Sigmoid colon (tissue), 7 donors: ENCODE measurements at regions of chr1 and their contacts with region 1.

Region 1: DNA sequence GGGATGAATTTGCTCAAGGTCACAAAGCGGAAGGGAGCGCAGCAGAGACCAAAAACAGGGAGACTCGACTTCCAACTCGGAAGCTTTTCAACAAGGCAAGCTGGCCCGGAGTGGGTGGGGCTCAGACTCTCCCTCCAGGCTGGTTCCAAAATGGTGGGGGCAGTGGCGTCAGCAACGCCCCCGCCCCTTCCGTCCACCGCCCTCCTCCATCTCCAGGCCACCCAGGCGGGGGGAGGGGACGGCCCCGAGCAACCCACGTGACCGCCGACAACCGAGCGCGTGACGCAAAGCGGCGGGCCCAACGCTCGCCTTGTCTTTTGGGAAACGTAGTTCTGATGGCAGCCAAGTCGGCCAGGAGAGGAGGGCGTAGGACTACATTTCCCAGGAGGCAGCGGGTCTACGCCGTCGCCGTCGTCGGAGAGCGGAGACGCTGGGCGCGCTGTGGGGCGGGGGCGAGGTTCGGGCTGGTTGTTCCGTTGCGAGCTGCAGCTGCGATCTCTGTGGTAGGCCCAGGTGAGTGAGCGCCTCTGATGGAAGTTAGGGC is at the start of gene THRAP3:
- DNase-seq: peak; percentile 100
- H3K4me3 ChIP-seq: peak within 1 kb of the TSS; percentile 72 to 92 (median 84)
- H3K27ac ChIP-seq: peak within 1 kb of the TSS; percentile 95 to 99 (median 98)
- H3K4me1 ChIP-seq: peaks cover 0 to 50% (median 46%) of the 10 kb centered on the region in 4 donors
- H3K27me3 ChIP-seq: no peaks in the 10 kb centered on the region
- CTCF ChIP-seq: no peak
- EP300 ChIP-seq: peak in 2 of 4 donors; percentile 64 to 95
- POLR2A ChIP-seq: peak; percentile 98 to 99
- total RNA-seq, gene THRAP3: 77.8 to 104 (median 89.9) TPM

Region 2: GRCh38 chr1:35220976-35221375 is 1003.1 kb before region 1 on chr1:
- intact Hi-C with region 1: no loop called
- DNase-seq: no peak
- H3K4me3 ChIP-seq: no peak overlapping the region
- H3K27ac ChIP-seq: no peak overlapping the region
- H3K4me1 ChIP-seq: peaks cover 0 to 19% (median 16%) of the 10 kb centered on the region in 4 donors
- H3K27me3 ChIP-seq: no peaks in the 10 kb centered on the region
- CTCF ChIP-seq: no peak
- EP300 ChIP-seq: no peak
- POLR2A ChIP-seq: no peak

Region 3: DNA sequence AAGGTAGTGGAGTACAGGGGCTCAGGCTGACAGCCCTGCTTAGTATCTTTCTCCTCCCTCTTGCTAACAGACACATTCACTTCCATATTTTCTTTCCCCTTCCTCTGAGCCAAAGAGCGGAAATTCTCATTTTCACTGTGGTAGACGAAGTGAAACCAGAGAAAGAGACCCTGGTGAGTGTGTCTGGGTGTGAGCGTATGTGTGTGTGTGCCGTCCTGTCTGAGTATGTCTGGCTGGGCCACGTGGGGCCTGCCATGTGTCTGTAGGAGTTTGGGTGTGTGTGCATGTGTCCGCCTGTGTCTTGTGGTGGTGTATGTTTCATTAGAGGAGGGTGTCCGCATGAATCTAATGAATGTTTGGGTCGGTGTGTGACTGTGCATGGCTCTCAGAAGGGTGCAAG is 100.7 kb before region 1 on chr1:
- intact Hi-C with region 1: no loop called
- DNase-seq: no peak
- H3K4me3 ChIP-seq: no peak overlapping the region
- H3K27ac ChIP-seq: peak overlapping the region in 2 of 4 donors; percentile 11 to 66
- H3K4me1 ChIP-seq: peaks cover 0 to 33% (median 21%) of the 10 kb centered on the region in 4 donors
- H3K27me3 ChIP-seq: no peaks in the 10 kb centered on the region
- CTCF ChIP-seq: no peak
- EP300 ChIP-seq: no peak
- POLR2A ChIP-seq: no peak

Region 4: GRCh38 chr1:36149237-36149972 is 74.7 kb before region 1 on chr1 and contains the start of gene TRAPPC3:
- intact Hi-C with region 1: loop called (anchors 1 kb)
- DNase-seq: peak; percentile 100
- H3K4me3 ChIP-seq: peak within 1 kb of the TSS; percentile 74 to 91 (median 78)
- H3K27ac ChIP-seq: peak within 1 kb of the TSS; percentile 97 to 100 (median 99)
- H3K4me1 ChIP-seq: peaks cover 0 to 61% (median 45%) of the 10 kb centered on the region in 4 donors
- H3K27me3 ChIP-seq: no peaks in the 10 kb centered on the region
- CTCF ChIP-seq: peak; percentile 84 to 97 (median 92)
- EP300 ChIP-seq: peak in 2 of 4 donors; percentile 3 to 60
- POLR2A ChIP-seq: peak; percentile 86 to 87
- total RNA-seq, gene TRAPPC3: 108 to 177 (median 129) TPM

Region 5: GRCh38 chr1:36187800-36188593 is 36.1 kb before region 1 on chr1:
- intact Hi-C with region 1: loop called (anchors 5 kb)
- DNase-seq: peak; percentile 96
- H3K4me3 ChIP-seq: no peak overlapping the region
- H3K27ac ChIP-seq: peak overlapping the region; percentile 87 to 100 (median 94)
- H3K4me1 ChIP-seq: peaks cover 0 to 28% (median 26%) of the 10 kb centered on the region in 4 donors
- H3K27me3 ChIP-seq: no peaks in the 10 kb centered on the region
- CTCF ChIP-seq: peak; percentile 79 to 98 (median 95)
- EP300 ChIP-seq: no peak
- POLR2A ChIP-seq: no peak

Region 6: GRCh38 chr1:36248250-36248894 is 24.3 kb after region 1 on chr1:
- intact Hi-C with region 1: loop called (anchors 1 kb)
- DNase-seq: peak; percentile 90
- H3K4me3 ChIP-seq: no peak overlapping the region
- H3K27ac ChIP-seq: peak overlapping the region; percentile 47 to 83 (median 68)
- H3K4me1 ChIP-seq: peaks cover 0 to 77% (median 67%) of the 10 kb centered on the region in 4 donors
- H3K27me3 ChIP-seq: no peaks in the 10 kb centered on the region
- CTCF ChIP-seq: no peak
- EP300 ChIP-seq: no peak
- POLR2A ChIP-seq: no peak

Region 7: DNA sequence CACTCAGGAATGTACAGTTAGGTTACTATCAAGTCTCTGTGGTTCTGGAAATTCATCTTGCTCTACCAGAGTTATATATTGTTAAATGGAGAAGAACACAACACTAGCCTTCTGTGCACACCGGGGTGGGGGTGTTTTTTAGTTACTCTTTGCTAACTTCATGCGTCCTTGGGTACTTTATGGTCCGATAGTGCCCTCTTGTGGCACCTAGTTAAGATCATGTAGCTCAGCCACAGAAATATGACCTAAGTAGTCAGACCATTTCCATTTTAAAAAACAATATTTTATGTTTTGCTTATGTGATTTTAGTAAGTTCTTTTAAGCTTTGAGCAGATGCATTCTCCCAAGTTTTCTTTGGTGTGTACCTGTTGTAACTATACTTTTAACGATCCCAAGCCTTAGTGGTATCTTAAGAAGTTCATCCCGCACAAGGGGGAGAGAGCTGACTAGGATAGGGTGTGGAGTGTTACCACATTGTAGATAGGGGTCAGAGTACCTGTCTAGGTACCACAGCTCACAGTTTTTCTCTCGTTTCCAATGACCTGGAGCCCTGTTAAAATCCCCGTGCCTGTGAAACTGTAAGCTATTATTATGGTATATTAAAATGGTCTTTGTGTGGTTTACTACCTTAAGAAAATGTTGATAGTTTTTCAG is 61.5 kb after region 1 on chr1:
- intact Hi-C with region 1: loop called (anchors 2 kb)
- DNase-seq: peak; percentile 82
- H3K4me3 ChIP-seq: no peak overlapping the region
- H3K27ac ChIP-seq: peak overlapping the region; percentile 20 to 71 (median 52)
- H3K4me1 ChIP-seq: peaks cover 0 to 53% (median 24%) of the 10 kb centered on the region in 4 donors
- H3K27me3 ChIP-seq: no peaks in the 10 kb centered on the region
- CTCF ChIP-seq: peak; percentile 56 to 70 (median 58)
- EP300 ChIP-seq: no peak
- POLR2A ChIP-seq: no peak

Region 8: GRCh38 chr1:36323597-36324352 is 99.7 kb after region 1 on chr1 and contains the start of gene EVA1B:
- intact Hi-C with region 1: no loop called
- DNase-seq: peak; percentile 94
- H3K4me3 ChIP-seq: peak within 1 kb of the TSS; percentile 53 to 85 (median 62)
- H3K27ac ChIP-seq: peak within 1 kb of the TSS; percentile 82 to 89 (median 84)
- H3K4me1 ChIP-seq: peaks cover 0 to 39% (median 33%) of the 10 kb centered on the region in 4 donors
- H3K27me3 ChIP-seq: no peaks in the 10 kb centered on the region
- CTCF ChIP-seq: no peak
- EP300 ChIP-seq: no peak
- POLR2A ChIP-seq: no peak
- total RNA-seq, gene EVA1B: 46.7 to 102 (median 71.0) TPM

Region 9: GRCh38 chr1:36385410-36386257 is 161.6 kb after region 1 on chr1 and contains the start of gene STK40:
- intact Hi-C with region 1: loop called (anchors 1 kb)
- DNase-seq: peak; percentile 99
- H3K4me3 ChIP-seq: peak within 1 kb of the TSS; percentile 78 to 97 (median 90)
- H3K27ac ChIP-seq: peak within 1 kb of the TSS; percentile 95 to 98 (median 97)
- H3K4me1 ChIP-seq: peaks cover 0 to 77% (median 66%) of the 10 kb centered on the region in 4 donors
- H3K27me3 ChIP-seq: no peaks in the 10 kb centered on the region
- CTCF ChIP-seq: no peak
- EP300 ChIP-seq: peak in 1 of 4 donors; percentile 28
- POLR2A ChIP-seq: peak in 1 of 2 donors; percentile 7
- total RNA-seq, gene STK40: 37.1 to 49.4 (median 43.5) TPM